Motor neuron (in vitro differentiated cells): ENCODE measurements at regions of chr2 and their contacts with region 1.

Region 1: GRCh38 chr2:12716282-12717190 is at the start of gene TRIB2:
- ATAC-seq: peak; percentile 36 to 82 (median 80)
- H3K4me3 ChIP-seq: peak within 1 kb of the TSS; percentile 53 to 90 (median 81)
- H3K27ac ChIP-seq: peak within 1 kb of the TSS; percentile 91 to 93
- H3K4me1 ChIP-seq: peaks cover 16 to 19% of the 10 kb centered on the region in 2 donors
- total RNA-seq, gene TRIB2: 10.4 to 112 (median 99.3) TPM

Region 2: GRCh38 chr2:11829947-11830707 is 886.4 kb before region 1 on chr2:
- in situ Hi-C with region 1: loop called in 7 of 9 experiments (anchors 10 to 25 kb)
- ATAC-seq: peak; percentile 83 to 99 (median 96)
- H3K4me3 ChIP-seq: peak overlapping the region in 4 of 5 donors; percentile 3 to 15 (median 10)
- H3K27ac ChIP-seq: peak overlapping the region; percentile 17 to 29
- H3K4me1 ChIP-seq: peaks cover 13 to 15% of the 10 kb centered on the region in 2 donors

Region 3: GRCh38 chr2:12169721-12170120 is 546.8 kb before region 1 on chr2:
- in situ Hi-C with region 1: loop called in 1 of 9 experiments (anchors 25 kb)
- ATAC-seq: peak in 5 of 8 experiments; percentile 30 to 68 (median 44)
- H3K4me3 ChIP-seq: no peak overlapping the region
- H3K27ac ChIP-seq: peak overlapping the region; percentile 55 to 80
- H3K4me1 ChIP-seq: peaks cover 34 to 36% of the 10 kb centered on the region in 2 donors

Region 4: DNA sequence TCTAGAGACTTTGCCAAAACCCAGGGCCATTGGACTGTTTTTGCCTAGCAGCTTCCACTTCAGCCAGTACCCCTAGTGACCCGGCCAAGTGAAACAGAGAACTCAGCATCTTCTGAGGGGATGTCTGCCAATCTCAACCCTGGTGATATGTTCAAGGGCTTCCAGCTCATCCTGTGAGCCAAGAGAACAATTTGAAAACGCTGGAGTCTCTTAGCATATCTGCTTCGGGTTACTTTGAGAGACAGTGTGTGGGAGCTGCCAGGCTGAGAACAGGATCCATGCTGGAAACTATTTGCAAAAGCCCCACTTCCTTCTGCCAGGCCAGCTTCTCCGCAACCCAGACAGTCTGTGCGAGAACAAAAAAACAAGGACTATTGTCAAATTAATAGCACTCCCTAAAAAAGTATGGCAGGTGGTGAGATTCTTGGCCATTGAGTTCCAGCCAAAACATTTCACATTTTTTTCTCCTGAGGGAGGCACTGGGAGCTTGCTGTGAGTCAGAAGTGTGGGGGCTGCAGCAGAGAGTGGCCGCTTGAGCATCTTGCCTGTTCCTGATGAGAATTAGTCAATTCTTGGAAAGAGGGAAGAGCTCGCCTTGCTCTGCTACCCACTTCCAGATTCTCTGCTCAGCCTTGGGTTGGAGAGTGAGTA is 395.4 kb before region 1 on chr2:
- in situ Hi-C with region 1: loop called in 1 of 9 experiments (anchors 25 kb)
- ATAC-seq: peak in 4 of 8 experiments; percentile 27 to 78 (median 54)
- H3K4me3 ChIP-seq: no peak overlapping the region
- H3K27ac ChIP-seq: no peak overlapping the region
- H3K4me1 ChIP-seq: no peaks in the 10 kb centered on the region

Region 5: DNA sequence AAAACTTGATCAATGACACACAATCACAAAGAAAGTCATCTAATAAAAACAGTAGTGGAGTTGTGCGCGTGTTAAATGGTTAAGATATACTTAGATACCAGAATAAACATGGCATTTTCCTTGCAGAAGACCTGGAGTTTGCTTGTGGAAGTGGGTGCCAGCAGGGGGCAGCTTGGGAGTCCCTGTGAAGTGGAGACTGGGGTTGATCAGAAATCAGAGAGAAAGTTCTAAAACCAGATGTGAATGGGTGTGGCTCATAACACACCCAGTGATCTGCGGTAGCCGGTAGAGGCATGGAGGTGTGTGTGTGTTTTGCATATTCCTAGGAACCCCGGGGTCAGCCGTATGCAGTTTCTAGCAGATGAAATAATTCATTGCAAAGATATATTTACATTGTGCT is 299.9 kb before region 1 on chr2:
- in situ Hi-C with region 1: loop called in 3 of 9 experiments (anchors 10 kb)
- ATAC-seq: peak in 3 of 8 experiments; percentile 95 to 97 (median 96)
- H3K4me3 ChIP-seq: no peak overlapping the region
- H3K27ac ChIP-seq: no peak overlapping the region
- H3K4me1 ChIP-seq: peaks cover 10 to 14% of the 10 kb centered on the region in 2 donors

Region 6: DNA sequence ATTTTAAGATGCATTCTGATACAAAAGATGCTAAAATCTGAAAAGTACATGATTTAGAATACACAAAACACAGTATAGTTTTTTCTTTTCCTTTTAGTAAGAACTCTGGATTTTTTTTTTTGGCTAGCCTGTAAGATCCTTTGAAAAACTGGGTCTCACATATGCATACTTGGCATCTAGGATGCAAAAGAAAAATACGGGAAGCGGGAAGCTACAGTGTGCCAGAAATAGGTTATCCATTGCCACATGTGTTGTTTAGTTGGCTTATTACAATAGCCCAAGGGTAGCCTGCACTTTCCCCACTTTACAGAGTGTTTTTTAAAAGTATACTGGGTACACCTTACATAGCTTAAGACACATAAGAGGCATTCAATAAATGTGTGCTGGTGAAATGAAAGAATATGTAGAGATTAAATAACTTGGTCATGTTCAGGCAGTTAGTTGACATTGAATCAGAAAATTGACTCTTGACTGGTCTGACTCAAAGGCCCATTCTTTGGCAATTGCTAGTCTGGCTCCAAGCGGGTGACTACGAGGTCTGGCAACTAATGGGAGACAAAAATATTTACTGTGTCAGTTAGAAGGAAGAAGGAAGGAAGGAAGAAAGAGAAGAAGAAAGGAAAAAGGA is 286.6 kb before region 1 on chr2:
- in situ Hi-C with region 1: loop called in 1 of 9 experiments (anchors 10 kb)
- ATAC-seq: peak in 1 of 8 experiments; percentile 51
- H3K4me3 ChIP-seq: no peak overlapping the region
- H3K27ac ChIP-seq: no peak overlapping the region
- H3K4me1 ChIP-seq: peaks cover 18 to 22% of the 10 kb centered on the region in 2 donors

Region 7: DNA sequence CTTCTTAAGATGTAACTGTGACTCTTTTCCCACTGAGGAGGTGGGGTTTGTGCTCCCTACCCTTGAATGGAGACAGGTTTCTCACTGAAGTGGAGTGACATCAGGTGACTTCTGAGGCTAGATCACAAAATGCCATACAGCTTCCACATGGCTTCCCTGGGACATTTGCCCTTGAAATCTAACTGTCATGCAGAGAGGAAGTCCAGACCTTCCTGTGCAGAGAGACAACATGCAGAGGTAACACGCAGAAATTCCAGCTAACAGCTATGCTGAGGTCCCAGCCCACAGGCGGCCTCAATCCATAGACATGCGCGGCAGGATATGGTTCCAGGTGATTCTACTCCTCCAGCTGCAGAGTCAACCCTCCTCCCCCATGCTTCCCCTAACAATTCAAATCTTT is 119.2 kb after region 1 on chr2:
- in situ Hi-C with region 1: no loop called
- ATAC-seq: no peak
- H3K4me3 ChIP-seq: no peak overlapping the region
- H3K27ac ChIP-seq: no peak overlapping the region
- H3K4me1 ChIP-seq: no peaks in the 10 kb centered on the region